ENCODE measurements at regions of chr17 and their contacts with region 1.

Region 1: GRCh38 chr17:75059369-75060345 is 12.6 kb downstream of the KCTD2 start:
- DNase-seq: no peak
- H3K4me3 ChIP-seq: no peak overlapping the region
- CTCF ChIP-seq: peak; percentile 53

Region 2: GRCh38 chr17:75012346-75013091 is 47.1 kb before region 1 on chr17 and contains the start of gene MRPL58:
- CTCF ChIA-PET with region 1: interaction called, 11 read pairs
- POLR2A ChIA-PET with region 1: no interaction called
- DNase-seq: no peak
- H3K4me3 ChIP-seq: peak within 1 kb of the TSS; percentile 86
- CTCF ChIP-seq: peak; percentile 70

Region 3: GRCh38 chr17:75077496-75078283 is 18.0 kb after region 1 on chr17:
- CTCF ChIA-PET with region 1: interaction called, 115 read pairs
- POLR2A ChIA-PET with region 1: interaction called, 3 read pairs
- DNase-seq: no peak
- H3K4me3 ChIP-seq: no peak overlapping the region
- CTCF ChIP-seq: peak; percentile 8

Region 4: GRCh38 chr17:75131280-75132017 is 71.8 kb after region 1 on chr17 and contains the start of gene NT5C:
- CTCF ChIA-PET with region 1: interaction called, 50 read pairs
- POLR2A ChIA-PET with region 1: interaction called, 5 read pairs
- DNase-seq: no peak
- H3K4me3 ChIP-seq: peak within 1 kb of the TSS; percentile 73
- CTCF ChIP-seq: peak; percentile 81

Region 5: DNA sequence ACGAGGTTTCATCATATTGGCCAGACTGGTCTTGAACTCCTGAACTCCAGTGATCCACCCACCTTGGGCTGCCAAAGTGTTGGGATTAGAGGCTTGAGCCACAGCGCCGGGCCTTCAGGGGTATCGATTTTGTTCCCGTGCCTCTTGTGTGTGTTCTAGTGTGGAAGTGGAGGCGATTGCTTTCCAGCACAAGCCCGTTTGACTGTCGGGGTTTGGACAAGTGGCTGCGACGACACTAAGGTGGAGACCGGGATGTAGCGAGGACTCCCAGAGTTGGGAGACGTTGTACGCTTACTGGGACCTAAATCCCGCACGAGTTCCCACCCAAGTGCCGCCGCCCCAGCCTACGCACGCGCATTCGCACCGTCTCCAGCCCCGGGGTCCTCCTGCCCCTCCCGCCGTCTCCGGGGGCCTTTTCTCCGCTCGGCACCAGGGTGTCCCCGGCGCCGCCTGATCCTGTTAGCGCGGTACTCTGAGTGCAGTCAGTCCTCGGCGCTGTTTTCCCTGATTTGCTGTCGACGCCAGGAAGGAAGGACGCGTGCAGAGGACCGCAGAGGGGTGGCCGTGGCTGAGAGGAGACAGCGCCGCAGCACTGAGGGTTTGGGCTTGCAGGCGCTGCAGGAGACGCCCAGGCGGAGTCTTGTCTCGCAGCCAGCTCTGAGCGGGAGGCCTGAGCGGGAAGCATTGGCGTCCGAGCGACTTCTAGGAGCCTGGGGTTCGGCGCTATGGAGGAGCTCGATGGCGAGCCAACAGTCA is 145.6 kb after region 1 on chr17 and contains the start of gene NUP85:
- CTCF ChIA-PET with region 1: interaction called, 120 read pairs
- POLR2A ChIA-PET with region 1: no interaction called
- DNase-seq: peak; percentile 31
- H3K4me3 ChIP-seq: peak within 1 kb of the TSS; percentile 100
- CTCF ChIP-seq: no peak

Region 6: DNA sequence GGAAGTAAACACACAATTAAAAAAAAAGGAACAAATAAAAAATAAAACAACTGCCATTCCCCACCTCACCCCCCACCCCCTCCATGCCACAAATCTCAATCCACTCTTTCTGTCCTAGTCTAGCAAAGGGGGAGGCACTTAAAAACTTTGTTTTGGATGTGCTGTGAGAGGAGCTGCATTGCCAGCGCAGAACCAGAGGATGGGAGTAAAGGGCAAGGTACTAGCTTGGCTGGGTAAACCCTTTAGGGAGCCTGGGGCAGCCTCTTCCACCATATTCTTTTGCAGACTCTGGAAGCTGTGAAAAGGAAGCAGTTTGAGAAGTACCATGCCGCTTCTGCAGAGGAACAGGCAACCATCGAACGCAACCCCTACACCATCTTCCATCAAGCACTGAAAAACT is 203.4 kb after region 1 on chr17:
- CTCF ChIA-PET with region 1: no interaction called
- POLR2A ChIA-PET with region 1: no interaction called
- DNase-seq: no peak
- H3K4me3 ChIP-seq: peak overlapping the region; percentile 8; the same call in 1 of the 2 replicates
- CTCF ChIP-seq: no peak

Measured in AG04449 (cell line).